Activated CD4-positive, alpha-beta T cell treated with anti-CD3 and anti-CD28 coated beads for 36 hours (primary cell): ENCODE measurements at regions of chr2 and their contacts with region 1.

Region 1: DNA sequence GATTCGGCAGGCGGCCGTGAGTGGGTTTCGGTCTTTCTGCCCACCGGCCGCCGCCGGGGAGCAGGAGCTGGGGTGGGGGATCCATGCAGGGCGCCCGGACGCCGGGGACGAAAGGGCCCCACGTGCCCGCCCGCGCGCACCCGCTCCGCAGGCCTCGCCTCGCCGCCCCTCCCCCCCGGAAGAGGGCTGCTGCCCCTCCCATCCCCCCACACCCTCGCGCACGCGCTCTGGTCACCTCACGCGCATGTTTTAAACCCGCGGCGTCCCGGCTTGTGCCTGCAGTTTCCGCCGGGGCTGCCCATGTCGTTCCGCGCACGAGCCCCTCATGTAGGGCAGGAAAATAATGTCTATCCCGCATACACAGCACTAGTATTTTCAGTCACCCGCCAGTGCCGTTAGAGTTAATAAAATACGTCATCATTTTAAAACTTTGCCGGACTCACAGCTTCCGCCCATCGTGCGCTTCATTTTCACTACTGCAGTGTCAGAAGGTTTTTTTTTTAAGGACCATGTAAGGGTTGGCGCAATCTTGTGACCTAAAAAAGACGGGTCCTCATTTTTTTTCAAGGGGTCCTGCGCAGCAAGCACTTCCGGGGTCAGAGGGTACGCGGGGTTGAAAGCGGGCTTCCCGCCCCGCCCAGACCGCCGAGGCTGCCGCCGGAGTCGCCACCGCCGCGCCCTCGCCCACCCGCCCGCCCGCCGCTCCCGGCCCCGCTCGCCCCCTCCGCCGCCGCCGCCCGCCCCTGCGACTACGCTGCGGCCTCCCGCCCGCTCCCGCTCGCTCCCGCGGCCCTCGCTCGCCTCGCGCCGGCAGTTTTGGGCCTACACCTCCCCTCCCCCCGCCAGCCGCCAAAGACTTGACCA is at the start of gene PCBP1:
- DNase-seq: peak; percentile 98
- ATAC-seq: peak; percentile 37
- H3K4me3 Mint-ChIP-seq: peak within 1 kb of the TSS; percentile 100
- H3K27ac Mint-ChIP-seq: peak within 1 kb of the TSS; percentile 100
- H3K4me1 Mint-ChIP-seq: peaks cover 52% of the 10 kb centered on the region
- H3K27me3 Mint-ChIP-seq: no peaks in the 10 kb centered on the region
- total RNA-seq, gene PCBP1: 417 to 450 TPM

Region 2: GRCh38 chr2:69770193-69771146 is 316.6 kb before region 1 on chr2:
- CTCF ChIA-PET with region 1: no interaction called
- POLR2A ChIA-PET with region 1: no interaction called
- intact Hi-C with region 1: loop called in 1 of 2 experiments (anchors 2 kb)
- DNase-seq: peak; percentile 37
- ATAC-seq: peak; percentile 28
- H3K4me3 Mint-ChIP-seq: no peak overlapping the region
- H3K27ac Mint-ChIP-seq: peak overlapping the region; percentile 38
- H3K4me1 Mint-ChIP-seq: peaks cover 49% of the 10 kb centered on the region
- H3K27me3 Mint-ChIP-seq: no peaks in the 10 kb centered on the region

Region 3: GRCh38 chr2:70104231-70105111 is 17.4 kb after region 1 on chr2:
- CTCF ChIA-PET with region 1: interaction called, 9 read pairs
- POLR2A ChIA-PET with region 1: interaction called, 13 read pairs
- intact Hi-C with region 1: loop called (anchors 1 kb)
- DNase-seq: peak; percentile 76
- ATAC-seq: no peak
- H3K4me3 Mint-ChIP-seq: peak overlapping the region; percentile 73
- H3K27ac Mint-ChIP-seq: peak overlapping the region; percentile 96
- H3K4me1 Mint-ChIP-seq: peaks cover 56% of the 10 kb centered on the region
- H3K27me3 Mint-ChIP-seq: no peaks in the 10 kb centered on the region

Region 4: GRCh38 chr2:70132244-70133126 is 45.4 kb after region 1 on chr2:
- CTCF ChIA-PET with region 1: interaction called, 26 read pairs
- POLR2A ChIA-PET with region 1: interaction called, 17 read pairs
- intact Hi-C with region 1: loop called (anchors 2 kb)
- DNase-seq: peak; percentile 59
- ATAC-seq: peak; percentile 34
- H3K4me3 Mint-ChIP-seq: peak overlapping the region; percentile 86
- H3K27ac Mint-ChIP-seq: peak overlapping the region; percentile 100
- H3K4me1 Mint-ChIP-seq: peaks cover 74% of the 10 kb centered on the region
- H3K27me3 Mint-ChIP-seq: no peaks in the 10 kb centered on the region

Region 5: GRCh38 chr2:70248181-70248847 is 161.2 kb after region 1 on chr2 and contains the start of gene TIA1:
- CTCF ChIA-PET with region 1: no interaction called
- POLR2A ChIA-PET with region 1: no interaction called
- intact Hi-C with region 1: loop called (anchors 1 to 5 kb)
- DNase-seq: peak; percentile 99
- ATAC-seq: peak; percentile 98
- H3K4me3 Mint-ChIP-seq: peak within 1 kb of the TSS; percentile 98
- H3K27ac Mint-ChIP-seq: peak within 1 kb of the TSS; percentile 97
- H3K4me1 Mint-ChIP-seq: peaks cover 30% of the 10 kb centered on the region
- H3K27me3 Mint-ChIP-seq: no peaks in the 10 kb centered on the region
- total RNA-seq, gene TIA1: 85.4 to 98.3 TPM